ENCODE measurements at regions of chr6 and their contacts with region 1.

Region 1: GRCh38 chr6:24991810-24992467 is 56.2 kb upstream of the RIPOR2 start:
- DNase-seq: no peak
- H3K4me3 ChIP-seq: no peak overlapping the region
- H3K27me3 ChIP-seq: no peaks in the 10 kb centered on the region
- CTCF ChIP-seq: peak; percentile 76

Region 2: GRCh38 chr6:24883618-24884017 is 108.3 kb before region 1 on chr6:
- CTCF ChIA-PET with region 1: interaction called, 15 read pairs
- POLR2A ChIA-PET with region 1: no interaction called
- DNase-seq: peak; percentile 55
- H3K4me3 ChIP-seq: no peak overlapping the region
- H3K27me3 ChIP-seq: no peaks in the 10 kb centered on the region
- CTCF ChIP-seq: no peak

Region 3: GRCh38 chr6:24910961-24911712 is 80.8 kb before region 1 on chr6:
- CTCF ChIA-PET with region 1: interaction called, 63 read pairs
- POLR2A ChIA-PET with region 1: no interaction called
- DNase-seq: peak; percentile 37
- H3K4me3 ChIP-seq: peak overlapping the region; percentile 77
- H3K27me3 ChIP-seq: peaks cover 3% of the 10 kb centered on the region
- CTCF ChIP-seq: no peak

Region 4: GRCh38 chr6:24931718-24932691 is 59.9 kb before region 1 on chr6:
- CTCF ChIA-PET with region 1: interaction called, 14 read pairs
- POLR2A ChIA-PET with region 1: no interaction called
- DNase-seq: no peak
- H3K4me3 ChIP-seq: no peak overlapping the region
- H3K27me3 ChIP-seq: no peaks in the 10 kb centered on the region
- CTCF ChIP-seq: no peak

Region 5: DNA sequence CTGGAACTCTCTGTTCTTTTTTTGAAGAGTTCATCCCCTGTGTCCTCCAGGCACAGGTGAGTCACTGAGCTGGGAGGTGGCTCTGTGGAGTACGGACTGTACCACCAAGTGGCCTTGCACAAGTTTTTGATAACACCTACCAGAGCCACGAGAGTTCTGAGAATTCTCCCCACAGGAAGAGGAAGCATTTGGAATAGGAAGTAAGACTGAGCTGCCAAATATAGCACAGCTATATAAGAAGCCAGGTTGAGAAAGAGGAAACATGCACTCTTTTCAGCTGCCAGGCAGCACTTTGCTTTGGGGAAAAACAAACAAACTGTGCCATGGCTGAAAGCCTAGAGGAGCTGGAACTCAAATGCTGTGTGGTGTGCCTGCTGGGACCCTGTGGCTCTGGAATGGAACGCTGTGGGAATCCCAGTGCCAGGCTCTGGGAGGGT is 14.6 kb after region 1 on chr6:
- CTCF ChIA-PET with region 1: interaction called, 27 read pairs
- POLR2A ChIA-PET with region 1: no interaction called
- DNase-seq: no peak
- H3K4me3 ChIP-seq: no peak overlapping the region
- H3K27me3 ChIP-seq: no peaks in the 10 kb centered on the region
- CTCF ChIP-seq: no peak

Region 6: GRCh38 chr6:25070547-25071366 is 78.8 kb after region 1 on chr6:
- CTCF ChIA-PET with region 1: interaction called, 26 read pairs
- POLR2A ChIA-PET with region 1: no interaction called
- DNase-seq: no peak
- H3K4me3 ChIP-seq: no peak overlapping the region
- H3K27me3 ChIP-seq: no peaks in the 10 kb centered on the region
- CTCF ChIP-seq: peak; percentile 83

Region 7: GRCh38 chr6:25278914-25279747 is 287.2 kb after region 1 on chr6 and contains the start of gene CARMIL1:
- CTCF ChIA-PET with region 1: no interaction called
- POLR2A ChIA-PET with region 1: no interaction called
- DNase-seq: no peak
- H3K4me3 ChIP-seq: peak within 1 kb of the TSS; percentile 63
- H3K27me3 ChIP-seq: no peaks in the 10 kb centered on the region
- CTCF ChIP-seq: peak; percentile 82
- polyA plus RNA-seq, gene CARMIL1: 3.7 and 6.0 TPM in 2 replicates

Region 8: DNA sequence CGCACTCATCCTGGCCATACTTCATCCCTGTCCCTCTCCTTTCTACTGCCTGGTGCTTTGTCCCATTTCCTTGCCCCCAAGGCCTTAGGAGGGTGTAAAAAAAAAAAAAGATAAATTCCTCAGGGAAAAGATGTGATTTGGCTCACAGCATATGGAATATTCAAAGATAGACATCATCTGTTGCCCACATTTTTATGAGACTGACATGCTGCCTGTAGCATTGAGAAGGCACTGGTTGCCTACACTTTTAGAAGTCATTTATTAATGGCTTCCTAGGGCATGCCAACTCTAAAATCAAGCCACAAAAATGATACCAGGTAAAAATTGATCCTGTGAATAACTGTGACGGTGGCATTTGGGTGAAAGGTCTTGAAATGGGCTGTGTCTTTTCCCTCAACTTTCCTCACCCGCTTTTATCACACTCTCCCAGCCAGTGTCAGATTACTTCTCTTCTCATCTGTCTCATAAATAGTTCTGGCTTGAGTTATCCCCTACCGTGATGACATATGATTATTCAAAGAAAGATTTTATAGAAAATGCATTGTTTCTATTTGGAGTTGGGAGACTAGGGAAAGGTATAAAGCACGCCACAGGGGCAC is 426.6 kb after region 1 on chr6:
- CTCF ChIA-PET with region 1: no interaction called
- POLR2A ChIA-PET with region 1: no interaction called
- DNase-seq: no peak
- H3K4me3 ChIP-seq: no peak overlapping the region
- H3K27me3 ChIP-seq: no peaks in the 10 kb centered on the region
- CTCF ChIP-seq: no peak